Activated CD4-positive, alpha-beta T cell treated with anti-CD3 and anti-CD28 coated beads for 36 hours (primary cell): ENCODE measurements at regions of chrX and their contacts with region 1.

Region 1: DNA sequence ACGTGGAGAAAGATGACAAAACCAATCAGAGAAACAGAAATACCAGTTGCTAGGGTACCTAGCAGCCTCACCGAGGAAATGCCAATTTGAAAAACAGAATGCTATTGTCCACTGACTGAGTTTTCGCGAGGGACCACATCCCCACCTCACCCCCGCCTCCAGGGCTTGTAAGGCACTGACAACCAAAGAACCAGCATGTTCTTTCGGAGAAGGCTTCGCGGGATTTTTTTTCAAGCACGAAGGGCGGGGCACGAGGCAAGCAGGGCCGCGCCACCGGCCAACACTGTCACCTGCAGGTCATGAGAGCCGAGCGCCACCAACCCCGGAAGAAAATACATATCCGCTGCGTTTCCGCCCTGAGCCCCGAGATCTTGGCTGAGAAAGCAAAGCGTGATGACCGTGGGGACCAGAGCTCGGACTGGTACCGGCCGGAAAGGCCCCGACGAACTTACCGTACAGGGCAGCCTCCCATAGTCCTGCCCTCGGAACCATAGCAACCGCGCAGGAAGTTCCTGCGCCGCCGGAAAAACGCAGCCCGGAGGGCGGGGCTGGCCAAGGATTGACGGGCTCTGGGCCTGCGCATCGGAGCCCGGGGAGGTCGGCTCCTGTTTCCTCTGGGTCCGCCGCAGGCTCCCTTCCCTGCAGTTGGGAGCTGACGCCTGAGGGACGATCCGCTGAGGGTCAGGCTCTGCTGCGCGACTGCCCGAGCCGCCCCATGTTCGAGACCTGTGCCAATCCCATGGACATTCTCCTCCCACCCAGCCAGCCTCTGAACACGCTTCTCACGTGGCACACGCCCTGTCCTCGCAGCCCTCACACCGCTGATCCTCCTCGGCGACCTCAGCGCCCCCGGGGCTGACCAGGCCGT is 59.2 kb upstream of the PAGE5 start:
- DNase-seq: peak; percentile 93
- ATAC-seq: peak; percentile 96
- H3K4me3 Mint-ChIP-seq: peak overlapping the region; percentile 79
- H3K27ac Mint-ChIP-seq: peak overlapping the region; percentile 89
- H3K4me1 Mint-ChIP-seq: peaks cover 10% of the 10 kb centered on the region
- H3K27me3 Mint-ChIP-seq: no peaks in the 10 kb centered on the region

Region 2: GRCh38 chrX:53683556-53684414 is 1477.1 kb before region 1 on chrX:
- CTCF ChIA-PET with region 1: no interaction called
- POLR2A ChIA-PET with region 1: no interaction called
- intact Hi-C with region 1: loop called in 1 of 2 experiments (anchors 10 kb)
- DNase-seq: peak; percentile 94
- ATAC-seq: peak; percentile 76
- H3K4me3 Mint-ChIP-seq: peak overlapping the region; percentile 80
- H3K27ac Mint-ChIP-seq: peak overlapping the region; percentile 93
- H3K4me1 Mint-ChIP-seq: peaks cover 28% of the 10 kb centered on the region
- H3K27me3 Mint-ChIP-seq: no peaks in the 10 kb centered on the region

Region 3: DNA sequence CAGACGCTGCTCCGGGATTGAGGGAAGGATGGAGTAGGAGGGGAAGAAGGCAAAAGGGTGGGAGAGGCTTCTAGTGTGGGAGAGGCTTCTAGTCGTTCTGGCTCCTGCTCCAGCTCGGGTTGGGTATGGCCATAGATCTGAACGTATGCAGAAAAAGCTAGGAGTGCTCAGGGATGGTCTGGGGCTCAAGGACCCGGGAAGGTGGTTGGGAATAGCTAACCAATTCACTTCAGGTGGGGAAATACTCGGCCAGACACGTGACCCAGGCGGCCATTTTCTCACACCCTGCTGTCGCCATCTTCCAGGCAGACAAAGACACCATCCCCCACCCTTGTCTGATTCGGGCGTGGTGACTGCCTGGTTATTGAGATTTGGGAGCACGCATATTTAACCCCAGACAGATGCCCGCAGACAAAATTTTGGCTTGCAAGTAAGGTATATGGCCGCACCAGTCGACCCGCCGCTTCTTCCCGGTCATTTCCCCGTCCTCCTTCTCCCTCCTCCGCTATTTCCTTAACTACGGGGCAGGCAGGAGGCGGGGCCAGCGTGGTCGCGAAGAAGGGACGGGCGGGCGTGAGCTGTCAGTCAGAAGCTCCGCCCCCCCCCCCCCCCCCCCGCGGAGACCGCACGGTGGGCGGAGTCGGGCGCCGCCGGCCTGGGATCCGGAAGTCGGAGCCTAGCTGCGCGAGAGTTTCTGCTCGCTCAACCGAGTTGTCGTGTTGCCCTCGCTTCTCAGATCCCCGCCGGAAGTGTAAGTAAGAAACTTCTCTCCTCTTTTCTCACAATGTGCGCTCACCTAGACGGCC is 631.2 kb before region 1 on chrX and contains the start of gene GNL3L:
- CTCF ChIA-PET with region 1: no interaction called
- POLR2A ChIA-PET with region 1: no interaction called
- intact Hi-C with region 1: loop called in 1 of 2 experiments (anchors 1 kb)
- DNase-seq: peak; percentile 89
- ATAC-seq: peak; percentile 88
- H3K4me3 Mint-ChIP-seq: peak within 1 kb of the TSS; percentile 90
- H3K27ac Mint-ChIP-seq: peak within 1 kb of the TSS; percentile 90
- H3K4me1 Mint-ChIP-seq: peaks cover 26% of the 10 kb centered on the region
- H3K27me3 Mint-ChIP-seq: no peaks in the 10 kb centered on the region
- total RNA-seq, gene GNL3L: 62.5 to 62.8 TPM

Region 4: GRCh38 chrX:54808605-54809483 is 352.1 kb before region 1 on chrX:
- CTCF ChIA-PET with region 1: no interaction called
- POLR2A ChIA-PET with region 1: no interaction called
- intact Hi-C with region 1: loop called in 1 of 2 experiments (anchors 1 kb)
- DNase-seq: peak; percentile 93
- ATAC-seq: peak; percentile 92
- H3K4me3 Mint-ChIP-seq: peak overlapping the region; percentile 87
- H3K27ac Mint-ChIP-seq: peak overlapping the region; percentile 89
- H3K4me1 Mint-ChIP-seq: peaks cover 16% of the 10 kb centered on the region
- H3K27me3 Mint-ChIP-seq: no peaks in the 10 kb centered on the region

Region 5: GRCh38 chrX:55057675-55058249 is 103.2 kb before region 1 on chrX:
- CTCF ChIA-PET with region 1: no interaction called
- POLR2A ChIA-PET with region 1: interaction called, 3 read pairs
- intact Hi-C with region 1: loop called (anchors 2 to 5 kb)
- DNase-seq: peak; percentile 31
- ATAC-seq: peak; percentile 73
- H3K4me3 Mint-ChIP-seq: peak overlapping the region; percentile 46
- H3K27ac Mint-ChIP-seq: no peak overlapping the region
- H3K4me1 Mint-ChIP-seq: peaks cover 18% of the 10 kb centered on the region
- H3K27me3 Mint-ChIP-seq: no peaks in the 10 kb centered on the region

Region 6: GRCh38 chrX:55754861-55755294 is 594.0 kb after region 1 on chrX:
- CTCF ChIA-PET with region 1: no interaction called
- POLR2A ChIA-PET with region 1: no interaction called
- intact Hi-C with region 1: loop called in 1 of 2 experiments (anchors 10 kb)
- DNase-seq: peak; percentile 13
- ATAC-seq: peak; percentile 94
- H3K4me3 Mint-ChIP-seq: no peak overlapping the region
- H3K27ac Mint-ChIP-seq: no peak overlapping the region
- H3K4me1 Mint-ChIP-seq: peaks cover 12% of the 10 kb centered on the region
- H3K27me3 Mint-ChIP-seq: no peaks in the 10 kb centered on the region